ENCODE measurements at regions of chr4 and their contacts with region 1.

Region 1: DNA sequence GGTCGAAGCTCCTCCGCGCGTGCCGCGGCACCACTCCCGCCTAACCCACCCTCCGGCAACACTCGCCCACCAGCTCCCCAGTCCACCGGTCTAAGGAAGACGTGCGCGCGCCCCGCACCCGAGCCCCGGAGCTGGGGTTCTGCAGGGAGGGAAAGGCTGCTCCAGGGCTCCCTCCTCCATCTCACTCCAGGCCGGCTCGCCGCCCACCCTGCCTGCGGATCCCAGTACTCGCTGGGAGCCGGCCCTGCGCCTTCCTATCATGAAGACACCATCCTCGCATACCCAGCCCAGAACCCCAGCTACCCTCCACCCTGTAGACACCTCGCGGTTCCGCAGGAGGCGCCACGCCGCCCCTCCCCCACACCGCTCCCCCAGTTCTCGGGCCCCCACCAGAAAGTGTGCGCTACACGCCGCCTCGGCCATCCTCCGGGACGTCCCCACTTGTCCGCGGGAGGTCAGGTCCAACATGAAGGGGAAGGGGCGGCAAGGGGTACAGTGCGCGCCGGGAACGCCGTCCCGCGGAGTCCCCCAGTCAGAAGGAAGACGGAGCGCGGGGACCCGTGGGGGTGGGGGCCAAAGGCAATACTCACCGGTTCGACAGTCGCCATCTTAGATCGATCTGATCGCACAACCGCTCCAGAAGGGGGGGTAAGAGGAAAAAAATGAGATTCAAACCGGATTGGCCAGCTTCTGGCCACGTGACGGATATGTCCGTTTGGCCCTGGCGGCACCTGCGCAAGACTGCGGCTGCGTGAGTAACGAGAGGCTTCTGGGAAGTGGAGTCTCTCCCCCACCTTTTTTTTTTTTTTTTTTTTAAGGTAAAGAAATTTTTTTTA is at the start of gene EIF4E:
- DNase-seq: peak; percentile 83
- ATAC-seq: peak; percentile 74
- H3K4me3 Mint-ChIP-seq: peak within 1 kb of the TSS; percentile 96
- H3K27ac Mint-ChIP-seq: peak within 1 kb of the TSS; percentile 98
- H3K4me1 Mint-ChIP-seq: peaks cover 59% of the 10 kb centered on the region
- H3K27me3 Mint-ChIP-seq: no peaks in the 10 kb centered on the region
- CTCF ChIP-seq: no peak
- total RNA-seq, gene EIF4E: 87.3 and 90.5 TPM in 2 replicates

Region 2: DNA sequence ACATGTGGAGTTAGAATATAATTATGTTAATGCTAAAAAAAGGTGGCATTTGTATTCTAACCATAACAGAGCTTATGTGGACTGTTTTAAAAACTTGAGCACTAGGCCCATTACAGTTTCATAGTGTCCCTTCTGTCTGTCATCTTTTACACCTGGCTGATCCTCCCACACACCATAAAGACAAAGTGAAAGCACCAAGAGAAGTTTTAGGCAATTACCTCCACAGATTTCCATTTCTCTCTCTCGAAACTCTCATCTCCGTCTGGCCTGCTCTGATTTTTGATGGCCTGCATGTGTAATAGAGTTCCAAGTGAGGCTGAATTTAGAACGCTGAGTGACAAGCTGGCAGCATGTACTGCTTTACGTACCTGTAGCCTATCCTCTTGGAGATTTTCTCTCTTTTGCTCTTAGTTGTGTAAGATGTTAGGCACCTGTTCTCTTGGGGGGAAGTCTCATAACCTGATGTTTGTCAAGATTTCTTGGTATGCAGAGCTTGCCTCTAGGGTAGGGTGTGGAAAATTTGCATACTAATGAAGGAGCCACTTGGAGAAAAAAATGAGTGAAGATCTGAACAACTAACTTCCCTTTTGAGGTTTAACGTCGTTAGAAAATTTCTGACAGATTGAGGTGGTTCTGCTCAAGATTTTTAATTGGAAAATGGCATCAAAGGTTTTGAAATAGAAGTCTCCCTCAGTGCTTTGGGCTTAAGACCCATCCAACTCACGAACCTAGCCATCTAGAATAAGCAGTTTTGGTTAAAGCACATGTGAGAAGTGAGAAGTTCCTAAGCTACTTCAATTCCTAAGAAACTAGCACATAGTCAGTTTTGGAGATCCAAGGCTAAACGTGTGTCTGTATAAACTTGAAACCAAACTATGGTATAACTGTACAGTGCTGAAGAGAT is 725.1 kb before region 1 on chr4:
- CTCF ChIA-PET with region 1: no interaction called
- POLR2A ChIA-PET with region 1: interaction called, 12 read pairs
- intact Hi-C with region 1: loop called (anchors 1 kb)
- DNase-seq: no peak
- ATAC-seq: peak; percentile 82
- H3K4me3 Mint-ChIP-seq: peak overlapping the region; percentile 62
- H3K27ac Mint-ChIP-seq: peak overlapping the region; percentile 86
- H3K4me1 Mint-ChIP-seq: peaks cover 37% of the 10 kb centered on the region
- H3K27me3 Mint-ChIP-seq: no peaks in the 10 kb centered on the region
- CTCF ChIP-seq: no peak

Region 3: GRCh38 chr4:98467627-98468072 is 461.1 kb before region 1 on chr4:
- CTCF ChIA-PET with region 1: no interaction called
- POLR2A ChIA-PET with region 1: interaction called, 17 read pairs
- intact Hi-C with region 1: loop called (anchors 5 kb)
- DNase-seq: peak; percentile 25
- ATAC-seq: peak; percentile 94
- H3K4me3 Mint-ChIP-seq: peak overlapping the region; percentile 61
- H3K27ac Mint-ChIP-seq: no peak overlapping the region
- H3K4me1 Mint-ChIP-seq: peaks cover 7% of the 10 kb centered on the region
- H3K27me3 Mint-ChIP-seq: no peaks in the 10 kb centered on the region
- CTCF ChIP-seq: peak; percentile 12

Region 4: GRCh38 chr4:98816815-98817214 is 111.9 kb before region 1 on chr4:
- CTCF ChIA-PET with region 1: no interaction called
- POLR2A ChIA-PET with region 1: no interaction called
- intact Hi-C with region 1: no loop called
- DNase-seq: no peak
- ATAC-seq: no peak
- H3K4me3 Mint-ChIP-seq: no peak overlapping the region
- H3K27ac Mint-ChIP-seq: no peak overlapping the region
- H3K4me1 Mint-ChIP-seq: no peaks in the 10 kb centered on the region
- H3K27me3 Mint-ChIP-seq: peaks cover 7% of the 10 kb centered on the region
- CTCF ChIP-seq: no peak

Region 5: GRCh38 chr4:98939892-98940298 is 11.2 kb after region 1 on chr4:
- CTCF ChIA-PET with region 1: interaction called, 6 read pairs
- POLR2A ChIA-PET with region 1: interaction called, 10 read pairs
- intact Hi-C with region 1: loop called (anchors 1 kb)
- DNase-seq: no peak
- ATAC-seq: peak; percentile 34
- H3K4me3 Mint-ChIP-seq: no peak overlapping the region
- H3K27ac Mint-ChIP-seq: no peak overlapping the region
- H3K4me1 Mint-ChIP-seq: peaks cover 8% of the 10 kb centered on the region
- H3K27me3 Mint-ChIP-seq: no peaks in the 10 kb centered on the region
- CTCF ChIP-seq: peak; percentile 34

Region 6: DNA sequence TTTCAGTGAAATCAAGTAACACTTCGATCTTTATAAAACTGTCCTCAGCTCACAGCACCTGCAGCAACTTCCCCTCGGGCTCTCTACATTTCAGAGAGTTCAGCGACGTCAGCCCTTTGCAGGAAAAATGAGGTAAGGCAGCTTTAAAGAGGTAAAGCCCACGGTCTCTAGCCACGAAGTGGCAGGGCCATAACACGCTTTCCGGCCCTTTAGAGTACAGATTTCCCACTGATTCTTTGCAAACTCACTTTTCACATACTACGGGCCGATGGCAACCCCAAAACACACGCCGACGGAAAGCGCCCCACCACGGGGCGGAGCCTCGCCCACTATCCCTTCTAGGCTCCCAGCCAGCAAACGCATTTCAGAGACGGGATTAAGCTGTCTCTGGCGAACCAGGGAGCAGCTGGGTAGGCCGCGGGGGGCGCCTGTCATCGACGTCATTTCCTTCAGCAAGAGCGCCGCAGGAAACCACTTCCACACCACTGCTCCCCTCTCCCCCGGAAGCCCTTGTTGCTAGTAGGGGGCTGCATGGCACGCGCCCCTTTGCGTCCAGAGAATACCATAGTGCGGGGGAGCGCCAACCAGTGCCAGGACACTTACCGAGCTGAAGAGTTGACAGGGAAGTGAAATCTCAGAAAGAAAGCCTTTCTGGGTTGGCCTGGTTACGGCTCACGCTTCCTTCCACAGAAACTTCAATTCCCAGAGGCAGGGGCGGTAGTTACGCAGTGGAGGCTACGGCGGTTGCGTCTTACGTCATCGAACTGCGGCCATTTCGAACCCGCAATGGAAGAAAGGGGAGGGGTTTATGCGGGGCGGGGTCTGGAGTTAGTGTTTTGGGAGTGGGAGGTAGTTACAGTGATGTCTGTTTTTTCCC is 634.8 kb after region 1 on chr4 and contains the start of gene TRMT10A:
- CTCF ChIA-PET with region 1: no interaction called
- POLR2A ChIA-PET with region 1: interaction called, 4 read pairs
- intact Hi-C with region 1: loop called (anchors 1 kb)
- DNase-seq: peak; percentile 88
- ATAC-seq: peak; percentile 85
- H3K4me3 Mint-ChIP-seq: peak within 1 kb of the TSS; percentile 99
- H3K27ac Mint-ChIP-seq: peak within 1 kb of the TSS; percentile 100
- H3K4me1 Mint-ChIP-seq: peaks cover 18% of the 10 kb centered on the region
- H3K27me3 Mint-ChIP-seq: peaks cover 12% of the 10 kb centered on the region
- CTCF ChIP-seq: no peak
- total RNA-seq, gene TRMT10A: 4.9 and 10.2 TPM in 2 replicates